Transverse colon (tissue), 4 donors: ENCODE measurements at regions of chr3 and their contacts with region 1.

Region 1: DNA sequence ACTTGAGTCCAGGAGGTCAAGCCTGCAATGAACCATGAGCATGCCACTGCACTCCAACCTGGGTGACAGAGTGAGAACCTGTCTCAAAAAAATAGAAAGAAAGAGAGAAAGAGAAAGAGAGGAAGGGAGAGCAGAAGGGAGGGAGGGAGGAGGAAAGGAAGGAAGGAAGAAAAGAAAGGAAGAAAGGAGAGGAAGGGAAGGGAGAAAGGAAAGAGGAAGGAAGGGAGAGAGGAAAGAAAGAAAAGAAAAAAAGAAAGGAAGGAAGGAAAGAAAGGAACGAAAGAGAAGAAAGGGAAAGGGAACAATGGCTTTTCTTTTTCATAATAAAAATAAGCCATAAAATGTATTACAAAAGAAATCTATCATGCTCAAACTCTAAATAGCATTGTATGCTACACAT is 116.9 kb downstream of the ZNF385D start:
- DNase-seq: no peak
- H3K4me3 ChIP-seq: no peak overlapping the region
- H3K27ac ChIP-seq: no peak overlapping the region
- H3K4me1 ChIP-seq: no peaks in the 10 kb centered on the region
- H3K27me3 ChIP-seq: no peaks in the 10 kb centered on the region
- CTCF ChIP-seq: no peak
- EP300 ChIP-seq: no peak
- POLR2A ChIP-seq: no peak

Region 2: DNA sequence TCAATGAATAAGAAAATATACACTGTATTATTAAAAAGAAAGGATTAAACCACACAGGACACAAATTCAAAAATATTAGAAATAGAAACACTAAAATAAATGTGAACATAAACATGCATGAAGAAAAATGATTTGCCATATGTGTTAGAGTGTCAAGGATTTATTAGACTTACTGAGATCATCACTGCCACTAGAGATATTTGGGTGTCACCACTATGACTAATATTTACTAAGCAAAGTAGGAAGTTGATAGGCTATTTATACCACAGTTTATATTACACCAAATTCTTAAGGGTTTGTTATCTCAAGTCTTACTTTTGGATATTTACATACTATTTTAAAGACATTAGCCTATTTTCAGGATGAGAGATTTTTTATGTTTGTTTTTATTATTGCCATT is 873.1 kb before region 1 on chr3:
- in situ Hi-C with region 1: no loop called
- intact Hi-C with region 1: loop called (anchors 5 kb)
- DNase-seq: no peak
- H3K4me3 ChIP-seq: no peak overlapping the region
- H3K27ac ChIP-seq: no peak overlapping the region
- H3K4me1 ChIP-seq: no peaks in the 10 kb centered on the region
- H3K27me3 ChIP-seq: no peaks in the 10 kb centered on the region
- CTCF ChIP-seq: no peak
- EP300 ChIP-seq: no peak
- POLR2A ChIP-seq: no peak

Region 3: DNA sequence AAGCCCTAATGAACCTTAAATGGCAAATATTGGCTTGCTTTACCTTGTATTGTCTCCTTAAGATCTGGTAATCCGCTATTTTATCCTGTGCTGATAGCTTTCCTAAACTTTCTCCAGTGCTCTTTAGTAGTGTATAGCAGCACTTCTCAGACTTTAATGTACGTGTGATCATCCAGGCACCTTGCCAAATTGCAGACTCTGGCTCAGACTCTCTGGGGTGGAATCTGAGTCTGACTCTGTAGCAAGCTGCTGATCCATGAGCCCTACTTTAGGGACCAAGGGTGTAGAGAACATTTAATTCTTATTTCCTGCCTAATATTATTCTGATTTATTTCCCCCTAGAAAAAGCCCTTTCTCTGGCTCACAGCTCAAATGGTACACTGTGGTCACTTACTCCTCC is 635.7 kb after region 1 on chr3:
- in situ Hi-C with region 1: no loop called
- intact Hi-C with region 1: no loop called
- DNase-seq: no peak
- H3K4me3 ChIP-seq: no peak overlapping the region
- H3K27ac ChIP-seq: no peak overlapping the region
- H3K4me1 ChIP-seq: no peaks in the 10 kb centered on the region
- H3K27me3 ChIP-seq: no peaks in the 10 kb centered on the region
- CTCF ChIP-seq: no peak
- EP300 ChIP-seq: no peak
- POLR2A ChIP-seq: no peak